CD8-positive, alpha-beta memory T cell (primary cell): ENCODE measurements at regions of chr14 and their contacts with region 1.

Region 1: DNA sequence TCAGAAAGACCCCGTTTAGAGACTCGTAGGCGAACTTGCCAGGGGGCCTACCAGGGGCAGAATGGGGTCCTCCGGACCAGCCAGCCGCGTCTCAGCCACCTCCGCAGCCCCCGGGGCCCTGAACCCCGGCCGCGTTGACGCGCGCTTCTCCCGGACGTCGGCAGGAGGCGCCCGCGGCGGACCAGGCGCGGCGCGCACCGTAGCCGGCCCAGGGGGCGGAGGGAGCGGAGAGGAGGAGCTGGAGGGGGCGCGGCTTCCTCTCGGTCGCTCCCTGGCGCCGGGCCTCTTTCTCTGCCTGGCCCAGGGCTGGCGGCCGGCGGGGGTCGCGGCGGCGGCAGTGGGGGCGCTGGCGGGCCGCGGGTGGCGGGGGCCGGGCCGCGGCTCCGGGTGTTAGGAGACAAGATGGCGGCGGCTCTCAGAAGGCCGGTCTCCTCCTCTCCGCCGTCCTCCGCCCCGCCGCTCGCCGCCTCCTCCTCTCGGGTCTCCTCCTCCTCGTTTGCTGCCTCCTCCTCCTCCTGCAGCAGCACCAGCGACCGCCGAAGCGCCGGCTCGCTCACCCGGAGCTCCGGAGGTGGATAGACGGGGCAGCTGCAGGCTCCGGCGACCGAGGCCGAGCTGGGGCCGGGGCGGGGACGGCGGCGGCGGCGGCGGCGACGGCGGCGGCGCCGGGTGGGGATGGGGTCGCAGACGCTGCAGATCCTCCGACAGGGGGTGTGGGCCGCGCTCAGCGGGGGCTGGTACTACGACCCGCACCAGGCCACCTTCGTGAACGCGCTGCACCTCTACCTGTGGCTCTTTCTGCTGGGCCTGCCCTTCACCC is at the start of gene PCNX1:
- DNase-seq: peak; percentile 84 to 95 (median 92)
- H3K4me3 ChIP-seq: peak within 1 kb of the TSS; percentile 92
- H3K4me3 Mint-ChIP-seq: peak within 1 kb of the TSS; percentile 82 to 99 (median 96)
- H3K27ac ChIP-seq: peak within 1 kb of the TSS; percentile 66
- H3K27ac Mint-ChIP-seq: peak within 1 kb of the TSS; percentile 91 to 99 (median 98)
- H3K4me1 ChIP-seq: peaks cover 41% of the 10 kb centered on the region
- H3K4me1 Mint-ChIP-seq: peaks cover 48 to 68% (median 61%) of the 10 kb centered on the region in 3 donors
- H3K27me3 ChIP-seq: no peaks in the 10 kb centered on the region
- H3K27me3 Mint-ChIP-seq: no peaks in the 10 kb centered on the region
- total RNA-seq, gene PCNX1: 37.4 to 46.2 TPM

Region 2: DNA sequence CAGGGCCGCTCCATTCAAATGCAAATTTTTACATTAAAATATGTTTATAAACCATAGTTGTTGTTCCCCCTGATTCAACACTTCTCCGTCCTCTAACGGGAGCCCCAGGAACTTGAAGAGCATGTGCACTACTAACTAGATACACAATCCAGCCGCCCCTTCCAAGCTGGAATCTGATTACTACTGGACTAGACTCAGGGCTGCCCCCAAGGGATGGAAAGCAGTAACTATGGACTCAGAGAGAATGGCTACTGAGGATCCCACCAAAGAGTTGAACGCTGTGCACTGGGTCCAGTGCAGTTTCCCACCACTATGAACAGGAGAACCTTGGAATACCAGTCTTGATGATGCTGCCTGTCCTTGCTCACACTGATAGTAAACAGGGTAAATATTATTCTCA is 48.8 kb before region 1 on chr14:
- CTCF ChIA-PET with region 1: no interaction called
- POLR2A ChIA-PET with region 1: no interaction called
- DNase-seq: no peak
- H3K4me3 ChIP-seq: no peak overlapping the region
- H3K4me3 Mint-ChIP-seq: no peak overlapping the region
- H3K27ac ChIP-seq: no peak overlapping the region
- H3K27ac Mint-ChIP-seq: no peak overlapping the region
- H3K4me1 ChIP-seq: no peaks in the 10 kb centered on the region
- H3K4me1 Mint-ChIP-seq: peaks cover 2 to 7% (median 5%) of the 10 kb centered on the region in 3 donors
- H3K27me3 ChIP-seq: no peaks in the 10 kb centered on the region
- H3K27me3 Mint-ChIP-seq: peaks cover 0 to 1% of the 10 kb centered on the region in 2 donors

Region 3: DNA sequence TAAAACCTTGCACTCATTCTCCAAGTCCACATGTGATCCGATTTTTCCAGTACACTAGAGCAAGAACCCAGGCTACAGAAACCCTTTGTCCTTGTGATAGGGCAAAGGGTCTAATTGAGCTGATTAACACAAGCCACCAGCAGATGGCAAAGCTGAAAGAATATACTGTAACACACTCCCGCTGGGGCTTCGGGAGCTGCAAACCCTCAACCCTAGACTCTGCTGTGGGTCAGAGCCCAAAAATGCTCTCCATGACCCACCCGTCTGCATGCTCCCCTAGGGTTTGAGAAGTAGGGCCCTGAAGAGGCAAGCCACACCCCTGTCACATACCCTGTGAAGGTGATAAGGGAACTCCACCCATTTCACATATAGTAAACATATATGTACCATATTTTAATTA is 33.8 kb before region 1 on chr14:
- CTCF ChIA-PET with region 1: interaction called, 28 read pairs
- POLR2A ChIA-PET with region 1: interaction called, 10 read pairs
- DNase-seq: peak in 1 of 5 donors; percentile 28
- H3K4me3 ChIP-seq: no peak overlapping the region
- H3K4me3 Mint-ChIP-seq: peak overlapping the region in 4 of 7 donors; percentile 15 to 69 (median 42)
- H3K27ac ChIP-seq: no peak overlapping the region
- H3K27ac Mint-ChIP-seq: peak overlapping the region in 7 of 8 donors; percentile 61 to 87 (median 80)
- H3K4me1 ChIP-seq: peaks cover 13% of the 10 kb centered on the region
- H3K4me1 Mint-ChIP-seq: peaks cover 18 to 25% (median 24%) of the 10 kb centered on the region in 3 donors
- H3K27me3 ChIP-seq: no peaks in the 10 kb centered on the region
- H3K27me3 Mint-ChIP-seq: no peaks in the 10 kb centered on the region

Region 4: GRCh38 chr14:70919774-70920173 is 12.4 kb after region 1 on chr14:
- CTCF ChIA-PET with region 1: interaction called, 24 read pairs
- POLR2A ChIA-PET with region 1: interaction called, 5 read pairs
- DNase-seq: peak in 1 of 5 donors; percentile 7
- H3K4me3 ChIP-seq: no peak overlapping the region
- H3K4me3 Mint-ChIP-seq: peak overlapping the region in 6 of 7 donors; percentile 23 to 71 (median 69)
- H3K27ac ChIP-seq: no peak overlapping the region
- H3K27ac Mint-ChIP-seq: peak overlapping the region; percentile 78 to 94 (median 90)
- H3K4me1 ChIP-seq: peaks cover 76% of the 10 kb centered on the region
- H3K4me1 Mint-ChIP-seq: peaks cover 85 to 100% (median 100%) of the 10 kb centered on the region in 3 donors
- H3K27me3 ChIP-seq: no peaks in the 10 kb centered on the region
- H3K27me3 Mint-ChIP-seq: no peaks in the 10 kb centered on the region

Region 5: DNA sequence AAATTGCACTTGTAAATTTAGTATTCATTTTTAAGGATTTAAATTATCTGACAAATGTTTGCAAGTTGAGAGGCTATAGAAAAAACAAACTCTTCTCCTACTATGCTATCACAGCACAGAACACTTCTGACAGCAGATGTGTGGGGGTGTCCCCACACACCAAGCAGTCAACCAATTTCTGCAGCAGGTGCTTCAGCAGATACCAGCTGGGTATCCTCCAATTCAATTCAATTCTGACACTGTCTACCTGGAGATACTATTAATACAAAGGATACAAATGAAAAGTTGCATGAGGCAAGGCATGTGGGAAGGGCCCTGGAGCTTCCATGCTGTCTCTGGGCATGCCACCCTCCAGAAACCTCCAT is 34.9 kb after region 1 on chr14:
- CTCF ChIA-PET with region 1: interaction called, 45 read pairs
- POLR2A ChIA-PET with region 1: interaction called, 9 read pairs
- DNase-seq: no peak
- H3K4me3 ChIP-seq: peak overlapping the region; percentile 10
- H3K4me3 Mint-ChIP-seq: peak overlapping the region; percentile 10 to 87 (median 64)
- H3K27ac ChIP-seq: no peak overlapping the region
- H3K27ac Mint-ChIP-seq: peak overlapping the region; percentile 24 to 95 (median 90)
- H3K4me1 ChIP-seq: peaks cover 15% of the 10 kb centered on the region
- H3K4me1 Mint-ChIP-seq: peaks cover 78 to 88% (median 84%) of the 10 kb centered on the region in 3 donors
- H3K27me3 ChIP-seq: no peaks in the 10 kb centered on the region
- H3K27me3 Mint-ChIP-seq: no peaks in the 10 kb centered on the region

Region 6: DNA sequence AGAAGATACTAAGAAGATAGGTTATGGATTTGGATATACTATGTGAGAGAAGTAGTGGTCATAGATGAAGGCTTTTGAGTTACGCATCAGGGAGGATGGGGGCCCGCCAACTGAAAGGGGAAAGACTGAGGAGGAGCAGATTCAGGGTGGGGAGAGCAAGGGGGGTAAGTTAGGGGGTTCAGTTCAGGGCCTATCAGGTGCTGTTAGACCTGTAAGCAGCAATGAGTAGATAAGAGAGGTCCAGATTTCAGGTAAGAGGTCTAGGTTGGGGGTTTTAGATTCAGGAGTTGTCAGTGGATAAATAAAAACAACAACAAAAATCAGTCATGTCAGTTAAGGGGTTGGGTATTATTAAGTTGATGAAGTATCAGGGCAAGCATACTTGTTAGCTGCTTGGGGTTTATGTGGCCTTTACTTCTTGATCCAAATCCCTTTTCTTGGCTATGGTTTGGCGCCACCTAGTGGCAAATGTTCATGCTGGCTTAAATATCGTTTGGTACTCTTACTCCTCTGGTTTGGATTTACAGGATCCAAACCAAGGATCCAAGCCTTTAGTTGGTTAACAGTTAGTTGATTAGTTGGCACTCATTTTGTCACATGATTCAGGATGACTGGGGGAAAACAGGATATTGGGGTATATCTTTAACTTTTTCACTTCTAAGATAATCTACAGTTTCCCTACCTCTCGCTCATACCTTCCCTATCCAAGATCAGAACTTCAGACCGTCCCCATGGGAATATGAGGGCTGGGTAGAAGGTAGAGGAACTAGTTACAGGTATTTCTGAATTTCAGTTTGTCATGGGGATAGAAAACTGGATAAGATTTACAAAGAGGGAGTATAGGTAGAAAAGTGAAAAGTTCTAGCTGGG is 65.0 kb after region 1 on chr14:
- CTCF ChIA-PET with region 1: interaction called, 35 read pairs
- POLR2A ChIA-PET with region 1: interaction called, 3 read pairs
- DNase-seq: peak; percentile 64 to 86 (median 77)
- H3K4me3 ChIP-seq: no peak overlapping the region
- H3K4me3 Mint-ChIP-seq: no peak overlapping the region
- H3K27ac ChIP-seq: no peak overlapping the region
- H3K27ac Mint-ChIP-seq: peak overlapping the region; percentile 5 to 94 (median 44)
- H3K4me1 ChIP-seq: peaks cover 34% of the 10 kb centered on the region
- H3K4me1 Mint-ChIP-seq: peaks cover 45 to 71% (median 56%) of the 10 kb centered on the region in 3 donors
- H3K27me3 ChIP-seq: no peaks in the 10 kb centered on the region
- H3K27me3 Mint-ChIP-seq: no peaks in the 10 kb centered on the region

Region 7: GRCh38 chr14:71776471-71777360 is 869.3 kb after region 1 on chr14:
- CTCF ChIA-PET with region 1: no interaction called
- POLR2A ChIA-PET with region 1: no interaction called
- DNase-seq: no peak
- H3K4me3 ChIP-seq: no peak overlapping the region
- H3K4me3 Mint-ChIP-seq: peak overlapping the region in 3 of 7 donors; percentile 19 to 76 (median 25)
- H3K27ac ChIP-seq: no peak overlapping the region
- H3K27ac Mint-ChIP-seq: no peak overlapping the region
- H3K4me1 ChIP-seq: no peaks in the 10 kb centered on the region
- H3K4me1 Mint-ChIP-seq: peaks cover 6 to 11% (median 7%) of the 10 kb centered on the region in 3 donors
- H3K27me3 ChIP-seq: no peaks in the 10 kb centered on the region
- H3K27me3 Mint-ChIP-seq: peaks cover 18 to 40% of the 10 kb centered on the region in 2 donors

Region 8: GRCh38 chr14:72776701-72777261 is 1869.4 kb after region 1 on chr14:
- CTCF ChIA-PET with region 1: no interaction called
- POLR2A ChIA-PET with region 1: no interaction called
- DNase-seq: no peak
- H3K4me3 ChIP-seq: no peak overlapping the region
- H3K4me3 Mint-ChIP-seq: peak overlapping the region in 1 of 7 donors; percentile 1
- H3K27ac ChIP-seq: no peak overlapping the region
- H3K27ac Mint-ChIP-seq: peak overlapping the region in 1 of 8 donors; percentile 62
- H3K4me1 ChIP-seq: no peaks in the 10 kb centered on the region
- H3K4me1 Mint-ChIP-seq: peaks cover 0 to 8% (median 6%) of the 10 kb centered on the region in 3 donors
- H3K27me3 ChIP-seq: no peaks in the 10 kb centered on the region
- H3K27me3 Mint-ChIP-seq: peaks cover 0 to 7% of the 10 kb centered on the region in 2 donors